ENCODE measurements at regions of chr12 and their contacts with region 1.

Region 1: DNA sequence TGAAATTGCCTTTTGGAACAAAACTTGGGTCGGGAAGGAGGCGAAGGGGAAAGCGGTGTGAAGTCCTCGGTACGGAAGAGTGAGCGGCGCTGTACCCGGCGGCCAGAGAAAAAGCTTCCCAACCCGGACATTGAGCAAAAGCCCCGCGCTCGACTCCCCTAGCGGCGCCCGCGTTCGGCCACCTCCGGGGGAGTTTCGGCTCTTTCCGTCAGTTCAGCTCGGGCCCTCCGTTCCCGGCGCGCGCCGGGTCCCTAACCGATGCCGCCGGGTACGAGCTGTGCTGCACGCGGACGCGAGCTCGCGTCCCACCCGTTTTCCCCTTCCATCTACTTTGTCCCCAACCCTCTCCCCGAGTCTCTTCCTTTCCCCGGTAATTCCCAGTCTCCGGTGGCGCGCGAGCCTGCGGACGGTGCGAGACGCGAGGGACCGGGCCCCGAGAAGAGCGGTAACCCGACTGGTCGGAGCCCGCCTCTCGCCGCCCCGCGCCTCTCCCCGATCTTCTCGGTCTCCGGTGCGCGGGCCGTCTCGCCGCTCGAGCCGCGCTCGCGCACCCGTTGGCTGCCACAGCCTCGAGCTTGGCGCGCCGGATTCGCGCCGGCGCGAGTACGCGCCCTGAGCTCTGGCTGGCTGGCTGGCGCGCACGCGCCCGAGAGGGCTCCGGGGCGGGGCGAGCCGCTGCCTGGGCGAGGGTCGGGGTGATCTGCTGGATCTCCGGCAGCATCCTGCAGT is 446 bp upstream of the SPATS2 start:
- DNase-seq: peak; percentile 92
- ATAC-seq: peak; percentile 83
- H3K4me3 Mint-ChIP-seq: peak overlapping the region; percentile 90
- H3K27ac Mint-ChIP-seq: peak overlapping the region; percentile 97
- H3K4me1 Mint-ChIP-seq: peaks cover 26% of the 10 kb centered on the region
- H3K27me3 Mint-ChIP-seq: peaks cover 2% of the 10 kb centered on the region

Region 2: DNA sequence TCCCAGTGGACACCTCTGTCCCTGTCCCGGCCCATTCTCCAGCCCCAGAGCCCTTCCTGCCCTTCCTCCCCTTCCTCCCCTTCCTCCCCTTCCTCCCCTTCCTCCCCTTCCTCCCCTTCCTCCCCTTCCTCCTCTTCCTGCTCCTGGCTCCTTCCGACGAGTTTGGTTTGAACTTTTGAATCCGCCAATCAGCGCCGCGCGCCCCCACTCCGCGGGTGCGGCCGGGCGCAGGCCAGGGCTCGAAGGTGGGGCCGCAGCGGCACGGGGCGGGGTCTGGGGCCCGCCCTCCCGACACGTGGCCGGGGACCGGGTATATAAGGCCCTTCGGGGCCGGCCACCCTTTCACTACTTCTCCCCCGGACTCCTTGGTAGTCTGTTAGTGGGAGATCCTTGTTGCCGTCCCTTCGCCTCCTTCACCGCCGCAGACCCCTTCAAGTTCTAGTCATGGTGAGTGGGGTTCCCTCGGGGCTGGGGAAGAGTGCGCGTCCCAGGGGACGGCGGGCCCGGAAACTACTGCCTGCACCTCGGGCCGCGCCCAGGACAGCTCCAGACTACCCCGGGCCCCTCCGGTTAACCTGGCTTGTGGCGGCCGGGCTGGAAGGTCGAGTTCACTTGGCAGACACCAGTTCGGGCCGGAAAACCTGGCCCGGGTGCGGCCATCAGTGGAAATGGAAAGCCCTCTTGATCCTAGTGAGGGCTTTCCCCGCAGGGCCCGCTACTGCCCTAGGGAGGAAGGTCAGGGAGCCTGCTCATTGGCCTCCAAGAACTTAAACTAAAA is 101.9 kb before region 1 on chr12 and contains the start of gene TUBA1C:
- POLR2A ChIA-PET with region 1: interaction called, 13 read pairs
- DNase-seq: peak; percentile 97
- ATAC-seq: peak; percentile 85
- H3K4me3 Mint-ChIP-seq: peak within 1 kb of the TSS; percentile 99
- H3K27ac Mint-ChIP-seq: peak within 1 kb of the TSS; percentile 98
- H3K4me1 Mint-ChIP-seq: peaks cover 30% of the 10 kb centered on the region
- H3K27me3 Mint-ChIP-seq: no peaks in the 10 kb centered on the region
- total RNA-seq, gene TUBA1C: 162 to 168 TPM

Region 3: GRCh38 chr12:49347384-49348237 is 19.2 kb before region 1 on chr12:
- POLR2A ChIA-PET with region 1: interaction called, 18 read pairs
- DNase-seq: peak; percentile 90
- ATAC-seq: peak; percentile 81
- H3K4me3 Mint-ChIP-seq: peak overlapping the region; percentile 81
- H3K27ac Mint-ChIP-seq: no peak overlapping the region
- H3K4me1 Mint-ChIP-seq: peaks cover 24% of the 10 kb centered on the region
- H3K27me3 Mint-ChIP-seq: peaks cover 80% of the 10 kb centered on the region

Region 4: DNA sequence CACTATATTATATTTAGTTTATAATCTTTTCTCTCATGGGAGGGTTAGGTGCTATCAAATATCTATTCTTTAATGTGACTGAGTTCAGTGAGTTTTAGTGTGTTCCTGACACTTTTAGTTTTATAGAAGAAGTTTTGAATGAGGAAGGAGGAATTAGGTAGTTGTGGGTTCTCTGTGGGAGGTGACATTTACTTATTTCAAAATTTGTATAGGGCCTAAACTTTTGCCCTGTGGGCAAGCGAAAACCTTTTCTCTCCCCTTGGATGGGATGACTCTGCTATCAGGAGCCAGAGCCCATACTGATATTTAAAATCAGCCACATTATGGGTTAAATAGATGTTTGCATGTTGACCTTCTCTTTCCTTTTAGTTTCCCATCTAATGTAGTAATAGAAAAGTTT is 44.0 kb after region 1 on chr12:
- POLR2A ChIA-PET with region 1: no interaction called
- DNase-seq: no peak
- ATAC-seq: no peak
- H3K4me3 Mint-ChIP-seq: no peak overlapping the region
- H3K27ac Mint-ChIP-seq: no peak overlapping the region
- H3K4me1 Mint-ChIP-seq: peaks cover 4% of the 10 kb centered on the region
- H3K27me3 Mint-ChIP-seq: no peaks in the 10 kb centered on the region

Region 5: GRCh38 chr12:49440035-49440434 is 73.2 kb after region 1 on chr12:
- POLR2A ChIA-PET with region 1: no interaction called
- DNase-seq: no peak
- ATAC-seq: no peak
- H3K4me3 Mint-ChIP-seq: no peak overlapping the region
- H3K27ac Mint-ChIP-seq: no peak overlapping the region
- H3K4me1 Mint-ChIP-seq: peaks cover 5% of the 10 kb centered on the region
- H3K27me3 Mint-ChIP-seq: no peaks in the 10 kb centered on the region

Region 6: DNA sequence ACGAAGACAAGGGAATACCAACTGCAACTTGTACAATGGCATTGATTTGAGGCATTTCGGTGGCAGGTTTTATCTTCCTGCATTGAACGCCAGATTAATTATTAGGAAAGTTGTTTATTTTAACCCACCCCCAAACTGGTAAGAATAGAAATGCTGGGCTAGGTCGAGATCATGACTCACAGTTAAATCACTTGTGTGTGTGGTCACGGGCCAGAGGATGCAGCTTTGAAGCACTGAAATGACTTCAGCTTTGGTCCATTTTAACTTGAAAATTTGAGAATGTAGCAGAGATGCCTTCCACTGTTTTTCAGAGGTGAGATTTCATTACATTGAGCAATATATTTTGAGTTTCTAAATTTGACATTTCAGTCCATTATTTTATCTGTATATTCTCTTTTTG is 148.4 kb after region 1 on chr12:
- POLR2A ChIA-PET with region 1: interaction called, 13 read pairs
- DNase-seq: no peak
- ATAC-seq: no peak
- H3K4me3 Mint-ChIP-seq: no peak overlapping the region
- H3K27ac Mint-ChIP-seq: no peak overlapping the region
- H3K4me1 Mint-ChIP-seq: peaks cover 2% of the 10 kb centered on the region
- H3K27me3 Mint-ChIP-seq: peaks cover 1% of the 10 kb centered on the region

Region 7: DNA sequence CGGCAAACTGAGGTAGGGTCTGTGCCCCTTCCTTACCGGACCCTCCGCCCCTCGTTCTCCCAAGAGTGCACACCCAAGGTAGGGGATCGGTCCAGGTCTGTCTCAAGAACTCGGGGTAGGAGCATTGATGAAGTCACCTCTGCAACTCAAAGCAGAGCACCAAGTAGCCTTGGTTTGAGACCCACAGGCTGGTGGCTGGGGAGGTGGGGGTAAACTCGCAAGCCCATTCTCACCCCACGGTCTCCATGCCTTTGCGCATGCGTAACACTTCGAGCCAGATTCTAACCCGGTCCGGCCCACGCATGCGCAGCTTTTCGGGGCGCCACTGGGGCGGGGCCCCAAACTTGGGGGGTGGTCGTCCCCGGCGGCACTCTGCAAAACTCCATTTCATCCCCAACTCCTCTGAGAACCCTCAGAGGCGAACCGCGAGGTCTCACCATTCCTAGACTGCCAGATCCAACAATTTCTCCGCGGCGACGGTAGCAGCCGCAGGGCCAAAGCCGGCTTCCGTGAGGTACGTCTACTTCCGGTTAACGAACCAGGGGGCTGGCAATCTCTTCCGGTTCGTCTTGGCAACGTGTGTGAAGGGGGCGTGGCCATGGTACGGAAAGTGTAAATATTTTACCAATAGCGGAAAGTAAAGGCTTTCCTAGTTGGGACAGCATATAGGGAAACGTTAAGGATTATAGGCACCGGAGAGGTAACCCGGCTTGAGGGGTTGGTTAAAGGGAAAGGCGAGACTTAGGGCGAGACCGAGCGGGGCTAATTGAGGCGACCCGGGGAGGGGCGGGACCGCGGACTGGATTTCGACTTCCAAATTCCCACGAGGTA is 201.0 kb after region 1 on chr12 and contains the start of gene MCRS1:
- POLR2A ChIA-PET with region 1: interaction called, 10 read pairs
- DNase-seq: peak; percentile 91
- ATAC-seq: peak; percentile 72
- H3K4me3 Mint-ChIP-seq: peak within 1 kb of the TSS; percentile 98
- H3K27ac Mint-ChIP-seq: peak within 1 kb of the TSS; percentile 99
- H3K4me1 Mint-ChIP-seq: peaks cover 46% of the 10 kb centered on the region
- H3K27me3 Mint-ChIP-seq: no peaks in the 10 kb centered on the region
- total RNA-seq, gene MCRS1: 83.8 to 83.9 TPM

Measured in activated naive CD8-positive, alpha-beta T cell treated with anti-CD3 and anti-CD28 coated beads, Interleukin-2, amount 10 ng/mL, durations not matched to agents 7 days and 5 days (primary cell).